GM12878 (cell line): ENCODE measurements at regions of chr6 and their contacts with region 1.

Region 1: GRCh38 chr6:56595490-56596122 is 47.1 kb downstream of the DST start:
- DNase-seq: peak; percentile 31
- ATAC-seq: peak; percentile 70
- H3K4me3 ChIP-seq: no peak overlapping the region
- H3K27ac ChIP-seq: peak overlapping the region; percentile 62
- H3K4me1 ChIP-seq: peaks cover 25% of the 10 kb centered on the region
- H3K27me3 ChIP-seq: no peaks in the 10 kb centered on the region
- CTCF ChIP-seq: peak; percentile 62 to 70 (median 68)
- EP300 ChIP-seq: no peak
- POLR2A ChIP-seq: no peak
- RAD21 ChIP-seq: peak; percentile 28

Region 2: DNA sequence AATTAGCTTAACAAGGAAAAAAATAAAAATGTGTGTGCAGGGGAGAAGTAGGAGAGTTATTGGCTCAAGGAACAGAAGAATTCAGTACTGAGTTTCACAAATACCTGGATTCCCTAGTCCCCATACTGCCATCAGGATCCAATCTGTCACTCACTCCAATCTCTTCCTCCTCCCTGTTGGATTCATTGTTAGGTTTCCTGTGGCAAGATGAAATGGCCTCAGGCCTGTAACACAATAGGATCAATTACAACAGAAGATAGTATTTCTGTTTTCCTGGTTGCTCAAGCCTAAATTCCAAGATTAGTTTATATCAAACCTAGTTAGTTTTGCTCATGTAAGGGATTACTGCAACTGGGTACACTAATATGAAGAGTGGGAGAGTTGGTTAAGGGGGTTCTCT is 1396.9 kb before region 1 on chr6:
- CTCF ChIA-PET with region 1: no interaction called
- POLR2A ChIA-PET with region 1: interaction called, 11 read pairs
- RAD21 ChIA-PET with region 1: no interaction called
- SMC1A ChIA-PET with region 1: no interaction called
- in situ Hi-C with region 1: no loop called
- intact Hi-C with region 1: no loop called
- DNase-seq: no peak
- ATAC-seq: no peak
- H3K4me3 ChIP-seq: no peak overlapping the region
- H3K27ac ChIP-seq: no peak overlapping the region
- H3K4me1 ChIP-seq: no peaks in the 10 kb centered on the region
- H3K27me3 ChIP-seq: no peaks in the 10 kb centered on the region
- CTCF ChIP-seq: no peak
- EP300 ChIP-seq: no peak
- POLR2A ChIP-seq: no peak
- RAD21 ChIP-seq: no peak

Region 3: DNA sequence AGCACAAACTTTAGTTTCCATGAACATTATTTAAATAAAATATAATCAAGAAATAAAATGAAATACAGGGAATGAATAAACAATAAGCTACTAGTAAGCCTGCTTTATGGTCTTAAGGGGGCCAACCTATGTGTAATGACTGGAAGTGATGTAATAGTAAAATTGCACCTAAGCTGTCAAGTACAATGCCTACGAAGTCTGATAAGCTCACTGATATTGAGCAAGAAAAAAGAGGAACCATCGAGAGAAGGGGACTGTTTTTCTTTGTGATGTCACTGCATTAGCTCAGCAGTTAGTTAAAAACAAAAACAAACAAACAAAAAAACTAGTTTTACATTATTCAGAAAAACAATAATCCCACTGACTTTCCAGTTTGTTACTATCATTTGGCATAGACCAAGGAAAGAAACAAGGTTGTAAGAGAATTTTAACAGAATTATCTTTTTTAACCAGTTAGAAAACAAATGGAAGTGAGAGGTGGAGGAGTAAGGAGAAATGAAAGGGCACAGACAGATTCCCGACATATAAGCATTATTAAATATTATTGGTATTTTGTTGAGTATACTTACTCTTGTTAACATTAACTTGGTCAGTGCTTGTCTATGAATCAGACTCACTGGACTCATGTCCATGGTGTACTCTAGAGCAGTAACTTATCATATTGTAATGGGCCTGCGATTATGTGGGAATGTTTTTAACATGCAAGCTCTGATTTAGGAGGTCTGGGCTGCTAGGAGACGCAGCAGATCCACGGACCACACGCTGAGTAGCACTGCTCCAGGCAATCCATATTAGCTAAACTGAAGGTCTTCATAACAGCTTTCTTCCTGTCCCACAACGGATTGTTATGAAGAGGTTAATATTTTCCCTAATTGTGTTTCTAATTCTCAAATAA is 917.0 kb before region 1 on chr6:
- CTCF ChIA-PET with region 1: no interaction called
- POLR2A ChIA-PET with region 1: no interaction called
- RAD21 ChIA-PET with region 1: no interaction called
- SMC1A ChIA-PET with region 1: no interaction called
- in situ Hi-C with region 1: no loop called
- intact Hi-C with region 1: no loop called
- DNase-seq: no peak
- ATAC-seq: no peak; the same call in 2 of the 3 replicates
- H3K4me3 ChIP-seq: no peak overlapping the region
- H3K27ac ChIP-seq: no peak overlapping the region
- H3K4me1 ChIP-seq: no peaks in the 10 kb centered on the region
- H3K27me3 ChIP-seq: no peaks in the 10 kb centered on the region
- CTCF ChIP-seq: no peak
- EP300 ChIP-seq: no peak
- POLR2A ChIP-seq: no peak
- RAD21 ChIP-seq: no peak

Region 4: DNA sequence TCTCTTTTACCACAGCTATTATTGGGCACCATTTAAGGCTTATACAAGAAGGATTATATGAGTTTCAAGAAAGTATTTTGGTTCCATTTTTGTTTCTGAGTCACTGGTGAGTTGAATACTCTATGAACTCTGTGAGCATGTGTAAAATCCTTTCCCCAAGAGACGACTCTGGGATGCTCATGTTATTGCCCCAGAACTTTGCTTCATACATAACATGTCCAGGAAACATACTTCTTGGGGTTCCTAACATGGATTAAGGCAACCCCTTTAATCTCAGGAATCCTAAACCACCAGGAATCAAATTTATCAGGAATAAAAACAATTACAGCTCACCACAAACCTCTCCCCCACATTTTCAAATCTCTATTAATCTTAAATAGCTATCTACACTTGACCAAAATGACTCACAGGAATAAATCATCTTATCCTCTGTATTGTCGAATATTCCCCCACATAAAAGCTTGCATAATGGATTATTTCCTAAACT is 230.7 kb before region 1 on chr6:
- CTCF ChIA-PET with region 1: interaction called, 23 read pairs
- POLR2A ChIA-PET with region 1: no interaction called
- RAD21 ChIA-PET with region 1: interaction called, 16 read pairs
- SMC1A ChIA-PET with region 1: interaction called, 10 read pairs
- in situ Hi-C with region 1: loop called (anchors 5 kb)
- intact Hi-C with region 1: no loop called
- DNase-seq: no peak
- ATAC-seq: no peak
- H3K4me3 ChIP-seq: no peak overlapping the region
- H3K27ac ChIP-seq: no peak overlapping the region
- H3K4me1 ChIP-seq: no peaks in the 10 kb centered on the region
- H3K27me3 ChIP-seq: no peaks in the 10 kb centered on the region
- CTCF ChIP-seq: no peak
- EP300 ChIP-seq: no peak
- POLR2A ChIP-seq: no peak
- RAD21 ChIP-seq: no peak

Region 5: GRCh38 chr6:56549014-56549413 is 46.6 kb before region 1 on chr6:
- CTCF ChIA-PET with region 1: interaction called, 18 read pairs
- POLR2A ChIA-PET with region 1: no interaction called
- RAD21 ChIA-PET with region 1: interaction called, 23 read pairs
- SMC1A ChIA-PET with region 1: interaction called, 10 read pairs
- in situ Hi-C with region 1: no loop called
- intact Hi-C with region 1: no loop called
- DNase-seq: no peak
- ATAC-seq: peak; percentile 46; the same call in 1 of the 3 replicates
- H3K4me3 ChIP-seq: no peak overlapping the region
- H3K27ac ChIP-seq: no peak overlapping the region
- H3K4me1 ChIP-seq: peaks cover 9% of the 10 kb centered on the region; the same call in 1 of the 2 replicates
- H3K27me3 ChIP-seq: no peaks in the 10 kb centered on the region
- CTCF ChIP-seq: peak; percentile 3 to 26 (median 24); a peak in 2 of 6 replicates
- EP300 ChIP-seq: no peak
- POLR2A ChIP-seq: no peak
- RAD21 ChIP-seq: peak; percentile 47

Region 6: GRCh38 chr6:56618050-56618449 is 22.4 kb after region 1 on chr6:
- CTCF ChIA-PET with region 1: interaction called, 19 read pairs
- POLR2A ChIA-PET with region 1: no interaction called
- RAD21 ChIA-PET with region 1: no interaction called
- SMC1A ChIA-PET with region 1: interaction called, 5 read pairs
- in situ Hi-C with region 1: no loop called
- intact Hi-C with region 1: no loop called
- DNase-seq: no peak
- ATAC-seq: peak; percentile 61
- H3K4me3 ChIP-seq: no peak overlapping the region
- H3K27ac ChIP-seq: no peak overlapping the region
- H3K4me1 ChIP-seq: no peaks in the 10 kb centered on the region
- H3K27me3 ChIP-seq: no peaks in the 10 kb centered on the region
- CTCF ChIP-seq: peak in 2 of 3 experiments; percentile 14 to 21; a peak in 1 of 6 replicates
- EP300 ChIP-seq: no peak
- POLR2A ChIP-seq: no peak
- RAD21 ChIP-seq: no peak

Region 7: DNA sequence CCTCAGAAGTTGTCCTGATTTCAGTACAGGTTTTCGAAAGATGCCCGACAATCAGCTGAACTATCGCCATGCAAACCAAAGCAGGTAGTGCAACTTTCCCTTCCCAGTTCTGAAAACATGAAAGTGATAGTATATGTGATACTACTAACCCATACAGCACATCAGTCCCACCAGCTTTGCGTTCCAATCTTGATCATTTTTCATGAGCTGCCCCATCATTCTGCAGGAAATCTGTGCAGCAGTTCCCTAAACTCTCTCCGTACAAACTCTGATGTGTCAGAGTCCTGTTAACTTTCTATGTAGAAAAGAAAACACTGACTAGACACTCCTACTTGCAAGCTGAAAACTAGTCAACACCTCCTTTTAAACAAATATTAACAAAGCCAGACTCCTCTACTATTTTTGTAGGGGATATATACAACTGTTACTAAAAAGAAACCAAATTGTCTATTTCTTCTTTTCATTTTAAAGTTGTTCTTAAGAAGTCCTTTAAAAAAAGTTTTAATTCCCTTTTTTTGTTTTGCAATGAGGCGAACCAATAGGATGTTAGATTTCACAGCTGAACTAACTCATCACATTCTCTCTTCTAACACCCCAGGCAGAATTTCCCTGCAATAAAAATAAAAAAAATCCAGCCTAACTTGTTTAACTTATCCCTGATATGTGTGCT is 146.7 kb after region 1 on chr6:
- CTCF ChIA-PET with region 1: interaction called, 10 read pairs
- POLR2A ChIA-PET with region 1: interaction called, 4 read pairs
- RAD21 ChIA-PET with region 1: interaction called, 3 read pairs
- SMC1A ChIA-PET with region 1: interaction called, 3 read pairs
- in situ Hi-C with region 1: no loop called
- intact Hi-C with region 1: no loop called
- DNase-seq: no peak
- ATAC-seq: peak; percentile 83
- H3K4me3 ChIP-seq: peak overlapping the region; percentile 17; the same call in 1 of the 2 replicates
- H3K27ac ChIP-seq: peak overlapping the region; percentile 50
- H3K4me1 ChIP-seq: peaks cover 20% of the 10 kb centered on the region
- H3K27me3 ChIP-seq: no peaks in the 10 kb centered on the region
- CTCF ChIP-seq: no peak
- EP300 ChIP-seq: no peak
- POLR2A ChIP-seq: no peak
- RAD21 ChIP-seq: no peak